ENCODE measurements at regions of chr1 and their contacts with region 1.

Region 1: GRCh38 chr1:167599957-167600581 is 30.0 kb upstream of the RCSD1 start:
- DNase-seq: no peak
- H3K4me3 ChIP-seq: peak overlapping the region in 1 of 8 donors; percentile 12
- H3K27ac ChIP-seq: peak overlapping the region in 6 of 8 donors; percentile 36 to 92 (median 85)
- H3K4me1 ChIP-seq: peaks cover 34 to 52% (median 41%) of the 10 kb centered on the region in 6 donors
- H3K27me3 ChIP-seq: no peaks in the 10 kb centered on the region
- CTCF ChIP-seq: peak in 10 of 11 experiments; percentile 20 to 76 (median 62)
- POLR2A ChIP-seq: no peak

Region 2: DNA sequence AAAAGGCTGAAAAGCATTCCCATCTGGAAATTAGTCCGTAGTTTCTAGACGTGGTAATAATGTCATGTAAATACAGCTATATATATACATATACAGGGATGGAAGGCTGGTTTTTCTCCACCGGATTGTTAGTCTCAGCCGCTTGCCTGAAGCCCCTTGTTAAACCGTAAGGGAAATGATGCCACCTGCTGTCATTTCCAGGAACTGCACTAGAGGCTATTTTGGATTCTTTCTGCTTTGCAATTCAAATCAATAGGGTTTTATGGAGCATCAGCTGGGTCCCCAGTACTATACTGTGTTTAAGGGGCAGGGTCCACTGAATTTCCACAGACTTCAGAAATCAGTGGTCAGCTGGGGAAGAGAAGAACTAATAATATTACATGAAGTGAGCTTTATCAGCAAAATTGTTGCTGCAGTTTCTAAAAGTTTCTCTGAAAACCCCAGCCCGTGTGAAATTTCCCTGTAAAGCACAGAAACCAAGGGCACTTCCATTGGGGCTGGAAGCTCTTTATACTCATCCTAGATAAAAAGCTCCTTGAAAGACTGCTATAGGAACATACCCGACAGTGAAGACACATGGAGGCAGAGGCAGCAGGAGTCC is 88.0 kb after region 1 on chr1:
- intact Hi-C with region 1: loop called (anchors 2 kb)
- DNase-seq: no peak
- H3K4me3 ChIP-seq: no peak overlapping the region
- H3K27ac ChIP-seq: peak overlapping the region in 4 of 8 donors; percentile 8 to 67 (median 54)
- H3K4me1 ChIP-seq: peaks cover 4 to 75% (median 26%) of the 10 kb centered on the region in 6 donors
- H3K27me3 ChIP-seq: no peaks in the 10 kb centered on the region
- CTCF ChIP-seq: peak; percentile 80 to 95 (median 91)
- POLR2A ChIP-seq: no peak

Region 3: GRCh38 chr1:167774710-167775109 is 174.6 kb after region 1 on chr1:
- intact Hi-C with region 1: no loop called
- DNase-seq: no peak
- H3K4me3 ChIP-seq: no peak overlapping the region
- H3K27ac ChIP-seq: no peak overlapping the region
- H3K4me1 ChIP-seq: peaks cover 0 to 8% (median 0%) of the 10 kb centered on the region in 6 donors
- H3K27me3 ChIP-seq: no peaks in the 10 kb centered on the region
- CTCF ChIP-seq: no peak
- POLR2A ChIP-seq: no peak

Measured in spleen (tissue), 13 donors.